CD4-positive, alpha-beta T cell (primary cell): ENCODE measurements at regions of chr1 and their contacts with region 1.

Region 1: GRCh38 chr1:180178511-180179161 is 24.0 kb downstream of the QSOX1 start:
- DNase-seq: peak; percentile 44 to 76 (median 61)
- ATAC-seq: peak; percentile 80
- H3K4me3 ChIP-seq: no peak overlapping the region
- H3K4me3 Mint-ChIP-seq: no peak overlapping the region
- H3K27ac ChIP-seq: no peak overlapping the region
- H3K27ac Mint-ChIP-seq: no peak overlapping the region
- H3K4me1 ChIP-seq: no peaks in the 10 kb centered on the region
- H3K4me1 Mint-ChIP-seq: no peaks in the 10 kb centered on the region
- H3K27me3 ChIP-seq: no peaks in the 10 kb centered on the region
- H3K27me3 Mint-ChIP-seq: no peaks in the 10 kb centered on the region
- CTCF ChIP-seq: peak; percentile 98

Region 2: DNA sequence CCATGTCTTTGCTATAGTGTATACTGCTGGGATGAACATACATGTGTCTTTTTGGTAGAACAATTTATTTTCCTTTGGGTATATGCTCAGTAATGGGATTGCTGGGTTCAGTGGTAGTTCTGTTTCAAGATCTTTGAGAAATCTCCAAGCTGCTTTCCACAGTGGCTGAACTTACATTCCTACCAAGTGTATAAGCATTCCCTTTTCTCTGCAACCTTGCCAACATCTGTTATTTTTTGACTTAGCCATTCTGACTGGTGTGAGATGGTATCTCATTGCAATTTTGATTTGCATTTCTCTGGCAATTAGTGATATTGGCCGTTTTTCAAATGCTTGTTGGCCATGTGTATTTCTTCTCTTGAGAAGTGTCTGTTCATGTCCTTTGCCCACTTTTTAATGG is 1270.3 kb before region 1 on chr1:
- CTCF ChIA-PET with region 1: no interaction called
- POLR2A ChIA-PET with region 1: no interaction called
- intact Hi-C with region 1: no loop called
- DNase-seq: no peak
- ATAC-seq: no peak
- H3K4me3 ChIP-seq: no peak overlapping the region
- H3K4me3 Mint-ChIP-seq: no peak overlapping the region
- H3K27ac ChIP-seq: no peak overlapping the region
- H3K27ac Mint-ChIP-seq: no peak overlapping the region
- H3K4me1 ChIP-seq: no peaks in the 10 kb centered on the region
- H3K4me1 Mint-ChIP-seq: no peaks in the 10 kb centered on the region
- H3K27me3 ChIP-seq: no peaks in the 10 kb centered on the region
- H3K27me3 Mint-ChIP-seq: no peaks in the 10 kb centered on the region
- CTCF ChIP-seq: no peak

Region 3: GRCh38 chr1:179706339-179706941 is 472.2 kb before region 1 on chr1:
- CTCF ChIA-PET with region 1: interaction called, 3 read pairs
- POLR2A ChIA-PET with region 1: no interaction called
- intact Hi-C with region 1: loop called (anchors 1 kb)
- DNase-seq: peak; percentile 29 to 85 (median 54)
- ATAC-seq: no peak
- H3K4me3 ChIP-seq: no peak overlapping the region
- H3K4me3 Mint-ChIP-seq: no peak overlapping the region
- H3K27ac ChIP-seq: no peak overlapping the region
- H3K27ac Mint-ChIP-seq: peak overlapping the region; percentile 70
- H3K4me1 ChIP-seq: peaks cover 15% of the 10 kb centered on the region
- H3K4me1 Mint-ChIP-seq: peaks cover 25% of the 10 kb centered on the region
- H3K27me3 ChIP-seq: no peaks in the 10 kb centered on the region
- H3K27me3 Mint-ChIP-seq: no peaks in the 10 kb centered on the region
- CTCF ChIP-seq: peak; percentile 80

Region 4: GRCh38 chr1:179867807-179868330 is 310.8 kb before region 1 on chr1:
- CTCF ChIA-PET with region 1: no interaction called
- POLR2A ChIA-PET with region 1: no interaction called
- intact Hi-C with region 1: loop called (anchors 1 to 2 kb)
- DNase-seq: peak; percentile 18 to 72 (median 48)
- ATAC-seq: peak; percentile 86
- H3K4me3 ChIP-seq: no peak overlapping the region
- H3K4me3 Mint-ChIP-seq: no peak overlapping the region
- H3K27ac ChIP-seq: no peak overlapping the region
- H3K27ac Mint-ChIP-seq: no peak overlapping the region
- H3K4me1 ChIP-seq: peaks cover 3% of the 10 kb centered on the region
- H3K4me1 Mint-ChIP-seq: peaks cover 37% of the 10 kb centered on the region
- H3K27me3 ChIP-seq: no peaks in the 10 kb centered on the region
- H3K27me3 Mint-ChIP-seq: no peaks in the 10 kb centered on the region
- CTCF ChIP-seq: peak; percentile 74

Region 5: GRCh38 chr1:180080433-180080832 is 98.2 kb before region 1 on chr1:
- CTCF ChIA-PET with region 1: no interaction called
- POLR2A ChIA-PET with region 1: no interaction called
- intact Hi-C with region 1: loop called in 1 of 2 experiments (anchors 5 kb)
- DNase-seq: no peak
- ATAC-seq: no peak
- H3K4me3 ChIP-seq: no peak overlapping the region
- H3K4me3 Mint-ChIP-seq: no peak overlapping the region
- H3K27ac ChIP-seq: no peak overlapping the region
- H3K27ac Mint-ChIP-seq: no peak overlapping the region
- H3K4me1 ChIP-seq: no peaks in the 10 kb centered on the region
- H3K4me1 Mint-ChIP-seq: no peaks in the 10 kb centered on the region
- H3K27me3 ChIP-seq: no peaks in the 10 kb centered on the region
- H3K27me3 Mint-ChIP-seq: no peaks in the 10 kb centered on the region
- CTCF ChIP-seq: no peak

Region 6: DNA sequence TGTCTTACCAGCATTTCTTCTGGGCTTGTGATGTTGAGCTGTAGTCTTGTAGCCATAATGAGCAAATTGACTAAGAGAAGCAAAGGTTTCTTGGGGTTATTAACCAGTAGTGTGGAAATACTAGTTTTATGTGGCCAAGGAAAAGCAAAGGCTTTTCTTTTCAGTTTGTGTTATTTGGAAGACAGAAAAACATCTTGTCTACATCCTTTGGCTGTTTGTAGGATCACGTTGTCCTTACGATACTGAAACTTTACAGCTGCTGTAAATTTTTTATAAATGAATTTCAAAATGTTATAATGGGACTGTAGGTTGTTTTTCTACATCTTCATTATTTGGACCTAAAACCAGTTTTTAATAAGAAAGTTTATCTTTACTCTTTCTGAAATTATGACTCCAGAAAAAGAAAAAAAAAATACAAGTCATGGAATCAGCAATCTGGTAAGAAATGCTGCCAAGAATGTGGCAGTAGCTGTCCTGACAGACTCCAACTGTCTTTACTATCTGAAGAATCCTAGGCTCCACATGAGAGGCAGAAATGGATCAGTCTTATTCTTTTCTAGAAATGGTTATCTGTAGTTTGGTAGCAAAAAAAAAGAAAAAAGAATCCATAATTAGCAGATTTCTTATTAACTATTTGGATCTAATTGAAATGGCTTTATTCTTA is 65.5 kb before region 1 on chr1:
- CTCF ChIA-PET with region 1: interaction called, 3 read pairs
- POLR2A ChIA-PET with region 1: no interaction called
- intact Hi-C with region 1: loop called (anchors 5 kb)
- DNase-seq: no peak
- ATAC-seq: no peak
- H3K4me3 ChIP-seq: no peak overlapping the region
- H3K4me3 Mint-ChIP-seq: no peak overlapping the region
- H3K27ac ChIP-seq: no peak overlapping the region
- H3K27ac Mint-ChIP-seq: no peak overlapping the region
- H3K4me1 ChIP-seq: no peaks in the 10 kb centered on the region
- H3K4me1 Mint-ChIP-seq: no peaks in the 10 kb centered on the region
- H3K27me3 ChIP-seq: no peaks in the 10 kb centered on the region
- H3K27me3 Mint-ChIP-seq: no peaks in the 10 kb centered on the region
- CTCF ChIP-seq: no peak

Region 7: GRCh38 chr1:180382317-180383115 is 203.9 kb after region 1 on chr1:
- CTCF ChIA-PET with region 1: no interaction called
- POLR2A ChIA-PET with region 1: no interaction called
- intact Hi-C with region 1: no loop called
- DNase-seq: no peak
- ATAC-seq: no peak
- H3K4me3 ChIP-seq: no peak overlapping the region
- H3K4me3 Mint-ChIP-seq: no peak overlapping the region
- H3K27ac ChIP-seq: no peak overlapping the region
- H3K27ac Mint-ChIP-seq: no peak overlapping the region
- H3K4me1 ChIP-seq: no peaks in the 10 kb centered on the region
- H3K4me1 Mint-ChIP-seq: peaks cover 10% of the 10 kb centered on the region
- H3K27me3 ChIP-seq: no peaks in the 10 kb centered on the region
- H3K27me3 Mint-ChIP-seq: no peaks in the 10 kb centered on the region
- CTCF ChIP-seq: no peak